ENCODE measurements at regions of chr18 and their contacts with region 1.

Region 1: GRCh38 chr18:36284671-36285295 is 12.7 kb upstream of the FHOD3 start:
- DNase-seq: peak in 6 of 7 donors; percentile 41 to 82 (median 64)
- H3K4me3 ChIP-seq: no peak overlapping the region
- H3K27ac ChIP-seq: no peak overlapping the region
- H3K4me1 ChIP-seq: peaks cover 0 to 5% of the 10 kb centered on the region in 2 donors
- H3K27me3 ChIP-seq: no peaks in the 10 kb centered on the region
- CTCF ChIP-seq: peak; percentile 77 to 97 (median 90)
- POLR2A ChIP-seq: no peak

Region 2: DNA sequence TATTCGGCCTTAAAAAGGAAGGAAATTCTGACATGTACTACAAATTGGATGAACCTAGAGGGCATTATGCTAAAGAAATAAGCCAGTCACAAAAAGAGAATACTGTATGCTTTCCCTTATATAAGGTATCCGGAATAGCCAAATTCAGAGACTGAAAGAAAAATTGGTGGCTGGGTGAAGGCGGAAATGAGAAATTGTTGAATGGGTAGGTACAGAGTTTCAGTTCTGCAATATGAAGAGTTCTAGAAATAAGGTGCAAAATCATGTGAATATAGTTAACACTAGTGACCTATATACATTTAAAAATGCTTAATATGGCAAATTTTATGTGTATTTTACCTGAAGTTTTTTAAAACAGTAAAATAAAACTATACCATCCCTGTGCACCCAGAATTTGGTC is 269.2 kb before region 1 on chr18:
- intact Hi-C with region 1: loop called in 1 of 2 experiments (anchors 5 kb)
- DNase-seq: no peak
- H3K4me3 ChIP-seq: no peak overlapping the region
- H3K27ac ChIP-seq: no peak overlapping the region
- H3K4me1 ChIP-seq: peaks cover 0 to 4% of the 10 kb centered on the region in 2 donors
- H3K27me3 ChIP-seq: no peaks in the 10 kb centered on the region
- CTCF ChIP-seq: no peak
- POLR2A ChIP-seq: no peak

Region 3: DNA sequence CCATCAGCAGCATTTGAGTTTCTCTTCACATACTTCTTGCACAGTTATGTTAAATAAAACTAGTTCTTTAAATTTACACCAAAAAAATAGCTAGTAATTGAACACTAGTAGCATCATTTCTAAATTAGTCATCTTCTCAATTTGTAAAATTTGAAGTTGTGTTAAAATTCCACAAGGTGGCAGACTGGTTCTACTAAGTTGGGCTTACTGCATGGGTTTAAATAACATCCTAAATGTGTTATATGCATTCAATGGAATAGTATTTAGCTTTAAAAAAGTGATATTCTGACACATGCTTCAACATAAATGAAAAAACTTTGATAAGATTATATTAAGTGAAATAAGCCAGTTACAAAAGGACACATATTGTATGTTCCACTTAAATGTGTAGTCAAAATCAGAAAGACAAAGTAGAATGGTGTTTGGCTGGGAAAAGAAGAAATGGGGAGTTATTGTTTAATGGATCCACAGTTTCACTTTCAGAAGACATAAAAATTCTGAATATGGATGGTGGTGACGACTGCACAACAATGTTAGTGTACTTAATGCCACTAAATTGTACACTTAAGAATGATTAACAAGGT is 188.8 kb before region 1 on chr18:
- intact Hi-C with region 1: loop called (anchors 5 kb)
- DNase-seq: no peak
- H3K4me3 ChIP-seq: no peak overlapping the region
- H3K27ac ChIP-seq: no peak overlapping the region
- H3K4me1 ChIP-seq: no peaks in the 10 kb centered on the region
- H3K27me3 ChIP-seq: no peaks in the 10 kb centered on the region
- CTCF ChIP-seq: peak; percentile 39 to 80 (median 64)
- POLR2A ChIP-seq: no peak

Region 4: GRCh38 chr18:36814994-36815393 is 530.2 kb after region 1 on chr18:
- intact Hi-C with region 1: no loop called
- DNase-seq: no peak
- H3K4me3 ChIP-seq: no peak overlapping the region
- H3K27ac ChIP-seq: peak overlapping the region in 1 of 5 donors; percentile 11
- H3K4me1 ChIP-seq: peaks cover 10 to 23% of the 10 kb centered on the region in 2 donors
- H3K27me3 ChIP-seq: no peaks in the 10 kb centered on the region
- CTCF ChIP-seq: no peak
- POLR2A ChIP-seq: no peak